ENCODE measurements at regions of chr19 and their contacts with region 1.

Region 1: DNA sequence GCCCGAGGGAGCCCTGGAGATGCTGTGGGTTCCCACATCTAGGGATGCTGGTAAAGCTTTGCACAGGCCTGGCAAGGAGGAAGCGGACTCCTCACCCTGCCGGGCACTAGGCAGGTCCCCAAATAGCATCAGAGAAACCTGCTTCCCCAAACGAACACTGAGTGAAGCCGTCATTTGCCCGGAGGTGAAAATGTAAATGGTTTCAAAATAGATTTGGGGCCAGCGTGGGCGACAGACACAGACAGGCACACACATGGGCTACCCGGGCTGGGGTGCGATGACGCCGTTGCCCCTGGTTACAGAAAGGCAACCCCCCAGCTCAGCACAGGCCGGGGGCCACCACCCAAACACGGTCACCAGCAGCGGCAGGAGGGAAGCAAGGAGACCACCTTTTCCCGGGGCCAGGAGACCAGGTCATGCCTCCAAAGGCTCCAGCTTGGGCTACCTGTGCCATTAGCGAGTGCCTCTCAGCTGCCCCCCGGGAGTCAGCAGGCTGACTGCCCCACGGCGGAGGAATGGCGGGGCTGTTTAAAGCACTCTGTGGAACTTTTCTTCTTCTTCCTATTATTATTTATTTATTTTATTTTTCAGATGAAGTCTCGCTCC is 47.5 kb upstream of the NDUFS7 start:
- DNase-seq: no peak
- H3K27ac ChIP-seq: no peak overlapping the region
- CTCF ChIP-seq: no peak

Region 2: GRCh38 chr19:1366296-1366695 is 30.1 kb after region 1 on chr19:
- CTCF ChIA-PET with region 1: no interaction called
- POLR2A ChIA-PET with region 1: no interaction called
- DNase-seq: no peak
- H3K27ac ChIP-seq: peak overlapping the region; percentile 23; the same call in 1 of the 2 replicates
- CTCF ChIP-seq: no peak

Region 3: DNA sequence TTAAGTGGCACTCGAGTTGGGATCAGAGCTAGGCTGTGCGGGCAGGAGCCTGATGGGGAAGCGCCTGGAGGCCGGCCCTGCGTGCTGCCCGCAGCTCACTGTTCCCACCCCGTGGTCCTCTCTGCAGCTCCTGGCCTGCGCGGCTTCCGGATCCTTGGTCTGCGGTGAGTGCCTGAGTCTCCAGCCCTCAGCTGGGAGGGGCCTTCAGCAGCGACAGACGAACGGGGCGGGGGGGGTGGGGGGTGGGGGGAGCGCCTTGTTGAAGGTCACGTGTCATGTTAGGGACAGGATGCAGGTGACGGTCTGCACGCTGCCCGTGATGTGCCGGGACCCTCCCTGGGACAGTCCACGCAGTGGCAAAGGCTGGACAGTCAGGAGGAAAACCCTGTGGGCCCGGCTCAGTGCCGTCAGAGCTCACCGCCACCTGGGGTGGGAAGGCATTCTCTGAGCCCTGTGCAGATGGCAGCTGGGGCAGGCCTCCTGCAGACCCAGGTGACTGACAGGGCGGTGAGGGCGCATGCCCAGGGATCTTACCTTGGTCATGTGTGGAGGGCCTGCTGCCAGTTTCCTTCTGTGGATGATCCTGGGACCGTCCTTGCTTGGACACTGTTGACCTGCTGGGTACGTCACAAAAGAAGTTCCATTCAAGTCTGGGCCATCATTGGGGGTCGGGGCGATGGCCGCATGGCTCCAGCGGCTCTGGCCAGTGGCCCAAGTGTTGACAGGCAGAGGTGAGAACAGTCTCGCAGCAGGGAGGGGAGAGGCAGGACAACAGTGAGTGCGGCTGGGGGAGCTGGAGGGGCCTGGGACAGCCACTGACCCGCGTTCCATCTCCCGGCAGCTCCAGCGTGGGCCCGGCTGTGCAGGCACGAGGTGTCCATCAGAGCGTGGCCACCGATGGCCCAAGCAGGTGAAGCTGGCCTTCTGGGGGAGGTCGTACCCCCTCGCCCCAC is 51.8 kb after region 1 on chr19:
- CTCF ChIA-PET with region 1: no interaction called
- POLR2A ChIA-PET with region 1: interaction called, 12 read pairs
- DNase-seq: no peak
- H3K27ac ChIP-seq: peak overlapping the region; percentile 90
- CTCF ChIP-seq: no peak

Measured in RWPE1 (cell line).